ENCODE measurements at regions of chr10 and their contacts with region 1.

Region 1: DNA sequence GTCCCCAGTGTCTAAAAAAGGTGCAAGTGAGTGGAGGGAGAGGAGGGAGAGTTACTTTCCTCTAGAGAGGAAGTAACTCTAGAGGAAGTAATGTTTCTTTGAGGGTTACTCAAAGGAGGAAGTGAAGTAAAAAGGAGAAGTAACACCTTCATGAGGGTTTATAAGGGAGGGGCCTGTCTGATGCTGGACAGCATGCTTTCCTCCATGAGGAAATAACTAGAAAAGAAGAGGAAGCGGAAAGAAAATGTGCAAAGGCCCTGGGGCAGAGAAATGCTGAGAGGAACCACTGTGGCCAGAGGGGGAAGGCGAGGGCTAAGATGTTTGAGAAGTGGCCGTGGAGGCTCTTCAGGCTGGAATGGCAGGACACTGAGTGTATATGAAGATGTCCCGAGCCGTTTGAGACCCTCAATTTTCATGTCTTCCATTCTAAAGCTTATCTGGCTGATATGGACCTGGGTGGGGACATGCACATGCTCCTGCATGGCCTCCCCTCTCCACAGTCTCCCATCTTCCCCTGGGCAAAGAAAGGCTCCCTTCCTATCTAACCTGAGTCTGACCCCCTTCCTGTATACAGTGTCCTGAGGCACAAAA is 3.4 kb upstream of the SLC18A2 start:
- DNase-seq: no peak
- ATAC-seq: no peak
- H3K4me3 ChIP-seq: no peak overlapping the region
- H3K27ac ChIP-seq: no peak overlapping the region
- H3K4me1 ChIP-seq: no peaks in the 10 kb centered on the region
- H3K27me3 ChIP-seq: peaks cover 37% of the 10 kb centered on the region
- CTCF ChIP-seq: no peak
- POLR2A ChIP-seq: no peak
- RAD21 ChIP-seq: no peak

Region 2: DNA sequence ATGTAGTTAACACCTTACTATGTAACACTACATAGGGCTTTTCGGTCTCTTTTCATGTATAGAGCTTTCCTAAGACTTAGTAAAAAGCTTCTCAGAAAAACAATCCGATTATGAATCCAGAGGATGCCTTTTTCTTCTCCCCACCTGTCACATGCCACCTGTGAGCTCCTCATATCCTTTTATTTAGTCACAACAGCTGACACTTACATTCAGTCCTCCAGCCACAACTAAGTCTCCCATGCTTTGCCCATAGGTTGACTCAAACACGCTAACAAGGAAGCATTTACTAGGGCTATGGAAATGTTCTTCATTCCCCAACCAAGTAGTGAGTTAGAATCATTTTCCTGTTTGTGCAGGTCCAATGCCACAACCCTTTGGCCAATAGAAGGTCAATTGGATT is 380.3 kb before region 1 on chr10:
- CTCF ChIA-PET with region 1: no interaction called
- POLR2A ChIA-PET with region 1: no interaction called
- dilution Hi-C with region 1: no loop called
- in situ Hi-C with region 1: no loop called
- intact Hi-C with region 1: no loop called
- DNase-seq: no peak
- ATAC-seq: no peak
- H3K4me3 ChIP-seq: no peak overlapping the region
- H3K27ac ChIP-seq: no peak overlapping the region
- H3K4me1 ChIP-seq: no peaks in the 10 kb centered on the region
- H3K27me3 ChIP-seq: peaks cover 3% of the 10 kb centered on the region; the same call in 1 of the 2 replicates
- CTCF ChIP-seq: no peak
- POLR2A ChIP-seq: no peak
- RAD21 ChIP-seq: no peak

Region 3: GRCh38 chr10:117312430-117312829 is 74.9 kb after region 1 on chr10:
- CTCF ChIA-PET with region 1: no interaction called
- POLR2A ChIA-PET with region 1: no interaction called
- dilution Hi-C with region 1: no loop called
- in situ Hi-C with region 1: no loop called
- intact Hi-C with region 1: loop called (anchors 5 kb)
- DNase-seq: no peak
- ATAC-seq: no peak
- H3K4me3 ChIP-seq: no peak overlapping the region
- H3K27ac ChIP-seq: no peak overlapping the region
- H3K4me1 ChIP-seq: no peaks in the 10 kb centered on the region
- H3K27me3 ChIP-seq: no peaks in the 10 kb centered on the region
- CTCF ChIP-seq: no peak
- POLR2A ChIP-seq: no peak
- RAD21 ChIP-seq: no peak